Breast epithelium (tissue), 4 donors: ENCODE measurements at regions of chr6 and their contacts with region 1.

Region 1: GRCh38 chr6:27161946-27162603 is 85.4 kb upstream of the PRSS16 start:
- DNase-seq: no peak
- H3K4me3 ChIP-seq: no peak overlapping the region
- H3K27ac ChIP-seq: no peak overlapping the region
- H3K4me1 ChIP-seq: no peaks in the 10 kb centered on the region
- H3K27me3 ChIP-seq: no peaks in the 10 kb centered on the region
- CTCF ChIP-seq: peak; percentile 72 to 80 (median 80)
- POLR2A ChIP-seq: no peak

Region 2: GRCh38 chr6:27114792-27115191 is 47.3 kb before region 1 on chr6:
- intact Hi-C with region 1: no loop called
- DNase-seq: no peak
- H3K4me3 ChIP-seq: no peak overlapping the region
- H3K27ac ChIP-seq: no peak overlapping the region
- H3K4me1 ChIP-seq: no peaks in the 10 kb centered on the region
- H3K27me3 ChIP-seq: no peaks in the 10 kb centered on the region
- CTCF ChIP-seq: no peak
- POLR2A ChIP-seq: no peak

Region 3: GRCh38 chr6:27601668-27602254 is 439.7 kb after region 1 on chr6:
- intact Hi-C with region 1: loop called (anchors 5 kb)
- DNase-seq: no peak
- H3K4me3 ChIP-seq: no peak overlapping the region
- H3K27ac ChIP-seq: no peak overlapping the region
- H3K4me1 ChIP-seq: no peaks in the 10 kb centered on the region
- H3K27me3 ChIP-seq: peaks cover 0 to 89% of the 10 kb centered on the region in 2 donors
- CTCF ChIP-seq: no peak
- POLR2A ChIP-seq: no peak